Right ventricle myocardium superior (tissue), 1 donor: ENCODE measurements at regions of chr1 and their contacts with region 1.

Region 1: DNA sequence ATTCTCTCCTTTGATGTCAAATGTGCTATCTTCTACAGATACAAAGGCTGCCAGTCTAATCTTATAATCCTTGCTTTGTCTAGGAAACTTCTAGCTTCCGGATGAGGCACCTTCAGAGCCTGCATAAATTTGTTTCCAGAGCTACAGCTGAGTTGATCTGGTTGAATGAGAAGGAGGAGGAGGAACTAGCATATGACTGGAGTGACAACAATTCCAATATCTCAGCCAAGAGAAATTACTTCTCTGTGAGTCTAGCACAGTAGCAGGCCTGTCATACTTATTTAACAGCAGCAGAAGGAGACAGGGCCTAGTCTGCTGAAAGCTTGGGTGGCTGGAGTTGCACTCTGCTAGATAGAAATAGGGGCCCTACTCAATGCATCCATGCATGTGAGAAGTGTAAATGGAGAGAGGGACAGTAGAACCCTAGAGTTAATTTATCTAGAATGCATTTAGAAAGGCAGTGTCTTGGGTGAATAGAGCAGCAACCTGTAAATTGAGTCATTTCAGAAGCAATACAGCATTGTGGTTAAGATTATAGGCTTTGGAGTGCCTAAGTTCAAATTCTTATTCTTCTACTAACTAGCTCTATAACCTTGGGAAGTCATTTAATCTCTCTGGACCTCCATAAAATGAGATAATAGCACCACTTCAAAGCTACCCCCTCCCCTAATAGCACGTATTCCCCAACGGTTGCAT is 89.0 kb downstream of the MACF1 start:
- DNase-seq: no peak
- ATAC-seq: peak; percentile 31

Region 2: DNA sequence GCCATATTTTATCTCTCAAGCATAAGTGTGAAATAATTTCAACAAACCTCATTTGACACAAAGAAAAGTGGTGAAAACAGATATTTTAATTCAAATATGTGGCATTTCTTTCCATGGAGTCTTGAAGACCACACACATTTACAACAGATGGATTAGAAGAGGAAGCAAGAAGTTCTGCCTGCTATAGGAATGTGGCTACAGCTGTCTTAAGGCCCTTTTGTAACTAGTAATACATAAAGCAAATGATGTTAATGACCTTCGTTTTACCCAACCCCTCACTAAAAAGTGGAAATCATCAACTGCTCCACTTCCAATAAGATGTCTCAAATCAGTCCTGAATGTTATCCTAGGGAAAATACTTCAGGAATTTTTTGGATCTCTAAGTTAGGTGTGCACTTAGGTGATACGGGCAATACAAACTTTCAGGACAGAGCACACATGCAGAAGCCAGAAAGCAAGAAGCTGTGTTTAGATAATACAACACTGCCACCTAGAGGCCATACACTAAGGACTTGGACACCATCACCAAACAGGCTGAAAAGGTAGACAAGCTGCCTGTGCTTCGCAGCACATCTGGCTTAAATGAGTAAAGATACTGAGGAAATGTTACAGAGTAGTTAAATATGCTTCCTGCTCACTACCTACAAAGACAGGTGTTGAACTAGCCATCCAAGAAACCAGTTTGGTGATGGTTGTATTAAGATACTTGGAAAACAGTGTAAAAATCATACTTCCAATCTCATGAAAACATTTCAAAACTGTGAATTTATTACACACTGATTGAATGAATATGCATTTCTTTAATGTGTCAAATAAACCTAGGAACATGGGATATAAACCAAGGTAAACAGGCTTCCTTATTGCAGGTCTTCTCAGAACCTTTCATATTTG is 458.3 kb before region 1 on chr1:
- intact Hi-C with region 1: no loop called
- DNase-seq: no peak
- ATAC-seq: peak; percentile 86

Region 3: GRCh38 chr1:39453603-39454002 is 160.1 kb after region 1 on chr1:
- intact Hi-C with region 1: loop called (anchors 10 kb)
- DNase-seq: peak; percentile 83
- ATAC-seq: peak; percentile 59